ENCODE measurements at regions of chr6 and their contacts with region 1.

Region 1: DNA sequence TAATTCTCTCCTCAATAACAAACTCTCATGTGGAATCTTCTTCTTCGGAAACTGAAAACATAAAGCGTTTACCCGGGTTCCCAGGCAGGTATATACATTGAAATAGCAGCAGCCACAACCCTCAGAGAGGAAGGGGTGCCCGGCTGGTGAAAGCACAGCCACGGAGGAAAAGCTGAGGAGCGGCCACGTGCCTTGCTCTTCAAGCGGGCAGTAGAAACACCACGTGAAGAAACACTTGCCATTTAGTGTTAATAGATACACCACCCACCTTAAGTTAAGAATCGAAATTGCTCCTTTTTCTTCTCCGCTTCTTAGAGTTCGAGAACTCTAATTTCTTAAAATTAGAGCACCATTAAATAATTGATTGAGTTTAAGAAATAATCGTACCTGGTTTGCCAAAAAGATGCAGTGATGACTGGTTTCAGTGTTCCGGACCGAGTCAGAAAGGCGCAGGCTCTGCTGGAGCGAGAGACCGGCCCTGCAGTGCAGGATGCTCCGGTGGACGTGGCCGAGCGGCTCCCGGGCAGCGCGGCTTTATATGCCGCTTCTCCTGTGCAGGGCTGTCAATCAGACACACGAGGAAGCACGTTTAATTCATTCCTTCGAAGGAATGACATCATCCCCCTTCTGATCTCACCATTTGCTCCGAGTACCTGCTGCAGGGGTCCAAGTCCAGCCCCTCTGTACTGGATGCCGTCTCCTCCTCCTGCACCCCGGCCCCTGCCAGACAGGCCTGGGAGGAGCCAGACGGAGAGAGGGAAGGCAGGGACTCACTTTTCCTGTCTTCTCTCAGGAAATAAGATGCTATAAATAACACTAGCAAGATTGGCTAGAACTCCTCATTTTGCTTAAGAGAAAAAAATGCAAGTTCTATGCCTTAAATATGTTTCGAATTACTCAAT is at the start of gene THBS2:
- DNase-seq: peak; percentile 93
- ATAC-seq: peak; percentile 77
- H3K4me3 ChIP-seq: peak within 1 kb of the TSS; percentile 68
- H3K27ac ChIP-seq: peak within 1 kb of the TSS; percentile 51
- H3K4me1 ChIP-seq: peaks cover 15% of the 10 kb centered on the region
- H3K27me3 ChIP-seq: no peaks in the 10 kb centered on the region
- CTCF ChIP-seq: no peak
- POLR2A ChIP-seq: peak; percentile 95
- RAD21 ChIP-seq: no peak; the same call in 1 of the 2 replicates
- total RNA-seq, gene THBS2: 101 and 113 TPM in 2 replicates

Region 2: GRCh38 chr6:168937054-168937453 is 316.5 kb before region 1 on chr6:
- CTCF ChIA-PET with region 1: no interaction called
- POLR2A ChIA-PET with region 1: no interaction called
- dilution Hi-C with region 1: no loop called
- in situ Hi-C with region 1: no loop called
- intact Hi-C with region 1: no loop called
- DNase-seq: peak; percentile 12
- ATAC-seq: peak; percentile 82
- H3K4me3 ChIP-seq: no peak overlapping the region
- H3K27ac ChIP-seq: no peak overlapping the region
- H3K4me1 ChIP-seq: peaks cover 2% of the 10 kb centered on the region; the same call in 1 of the 2 replicates
- H3K27me3 ChIP-seq: peaks cover 2% of the 10 kb centered on the region; the same call in 1 of the 2 replicates
- CTCF ChIP-seq: no peak
- POLR2A ChIP-seq: no peak
- RAD21 ChIP-seq: no peak

Region 3: GRCh38 chr6:169070506-169071176 is 182.9 kb before region 1 on chr6:
- CTCF ChIA-PET with region 1: no interaction called
- POLR2A ChIA-PET with region 1: no interaction called
- dilution Hi-C with region 1: no loop called
- in situ Hi-C with region 1: no loop called
- intact Hi-C with region 1: loop called (anchors 2 kb)
- DNase-seq: peak; percentile 100
- ATAC-seq: peak; percentile 92
- H3K4me3 ChIP-seq: no peak overlapping the region
- H3K27ac ChIP-seq: peak overlapping the region; percentile 84; the same call in 1 of the 2 replicates
- H3K4me1 ChIP-seq: peaks cover 27% of the 10 kb centered on the region
- H3K27me3 ChIP-seq: no peaks in the 10 kb centered on the region
- CTCF ChIP-seq: peak; percentile 32
- POLR2A ChIP-seq: no peak
- RAD21 ChIP-seq: peak; percentile 52

Region 4: GRCh38 chr6:169097381-169097959 is 156.1 kb before region 1 on chr6:
- CTCF ChIA-PET with region 1: no interaction called
- POLR2A ChIA-PET with region 1: no interaction called
- dilution Hi-C with region 1: no loop called
- in situ Hi-C with region 1: no loop called
- intact Hi-C with region 1: no loop called
- DNase-seq: peak; percentile 99
- ATAC-seq: peak; percentile 96
- H3K4me3 ChIP-seq: no peak overlapping the region
- H3K27ac ChIP-seq: peak overlapping the region; percentile 40; the same call in 1 of the 2 replicates
- H3K4me1 ChIP-seq: peaks cover 16% of the 10 kb centered on the region
- H3K27me3 ChIP-seq: no peaks in the 10 kb centered on the region
- CTCF ChIP-seq: no peak
- POLR2A ChIP-seq: no peak
- RAD21 ChIP-seq: no peak; the same call in 1 of the 2 replicates

Region 5: GRCh38 chr6:169371344-169372127 is 117.9 kb after region 1 on chr6:
- CTCF ChIA-PET with region 1: no interaction called
- POLR2A ChIA-PET with region 1: no interaction called
- dilution Hi-C with region 1: no loop called
- in situ Hi-C with region 1: no loop called
- intact Hi-C with region 1: loop called (anchors 5 kb)
- DNase-seq: peak; percentile 16
- ATAC-seq: peak; percentile 17; the same call in 1 of the 2 replicates
- H3K4me3 ChIP-seq: no peak overlapping the region
- H3K27ac ChIP-seq: no peak overlapping the region
- H3K4me1 ChIP-seq: peaks cover 3% of the 10 kb centered on the region; the same call in 1 of the 2 replicates
- H3K27me3 ChIP-seq: no peaks in the 10 kb centered on the region
- CTCF ChIP-seq: no peak
- POLR2A ChIP-seq: no peak
- RAD21 ChIP-seq: no peak

Region 6: GRCh38 chr6:169520104-169520503 is 266.5 kb after region 1 on chr6:
- CTCF ChIA-PET with region 1: interaction called, 3 read pairs
- POLR2A ChIA-PET with region 1: no interaction called
- dilution Hi-C with region 1: no loop called
- in situ Hi-C with region 1: no loop called
- intact Hi-C with region 1: loop called (anchors 1 kb)
- DNase-seq: peak; percentile 70
- ATAC-seq: peak; percentile 77
- H3K4me3 ChIP-seq: no peak overlapping the region
- H3K27ac ChIP-seq: no peak overlapping the region
- H3K4me1 ChIP-seq: no peaks in the 10 kb centered on the region
- H3K27me3 ChIP-seq: no peaks in the 10 kb centered on the region
- CTCF ChIP-seq: peak; percentile 82
- POLR2A ChIP-seq: peak; percentile 32; the same call in 1 of the 2 replicates
- RAD21 ChIP-seq: peak; percentile 91

Region 7: GRCh38 chr6:169701954-169702839 is 448.6 kb after region 1 on chr6 and contains the starts of genes C6orf120 and WDR27:
- CTCF ChIA-PET with region 1: no interaction called
- POLR2A ChIA-PET with region 1: no interaction called
- dilution Hi-C with region 1: no loop called
- in situ Hi-C with region 1: no loop called
- intact Hi-C with region 1: loop called (anchors 5 kb)
- DNase-seq: peak; percentile 95
- ATAC-seq: peak; percentile 93
- H3K4me3 ChIP-seq: peak within 1 kb of the TSS; percentile 76
- H3K27ac ChIP-seq: peak within 1 kb of the TSS; percentile 89
- H3K4me1 ChIP-seq: peaks cover 9% of the 10 kb centered on the region
- H3K27me3 ChIP-seq: no peaks in the 10 kb centered on the region
- CTCF ChIP-seq: no peak
- POLR2A ChIP-seq: peak; percentile 86
- RAD21 ChIP-seq: no peak; the same call in 1 of the 2 replicates
- total RNA-seq, gene C6orf120: 26.7 and 44.2 TPM in 2 replicates
- total RNA-seq, gene WDR27: 7.0 and 7.8 TPM in 2 replicates